Kidney (tissue), 22 donors: ENCODE measurements at regions of chr7 and their contacts with region 1.

Region 1: DNA sequence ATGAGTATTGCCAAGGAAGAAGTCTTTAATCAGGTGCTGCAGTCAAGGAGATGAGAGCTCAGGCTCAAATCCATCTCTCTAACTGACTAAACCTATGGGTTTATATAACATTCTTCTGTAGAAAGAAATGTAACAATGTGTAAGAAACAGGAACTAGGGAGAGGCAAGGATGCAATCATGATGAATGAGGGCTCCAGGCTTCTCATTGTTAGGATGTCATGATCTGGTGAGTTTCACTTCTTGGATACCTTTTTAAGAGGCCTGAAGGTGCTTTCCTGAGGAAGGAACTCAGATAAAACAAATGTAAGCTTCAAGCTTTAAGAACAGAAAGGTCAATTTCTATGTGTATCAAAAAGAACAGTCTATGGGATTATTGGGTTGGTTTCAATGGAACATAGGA is 30.8 kb upstream of the SCIN start:
- DNase-seq: no peak
- H3K4me3 ChIP-seq: no peak overlapping the region
- H3K27ac ChIP-seq: no peak overlapping the region
- H3K4me1 ChIP-seq: peaks cover 0 to 6% (median 0%) of the 10 kb centered on the region in 3 donors
- H3K27me3 ChIP-seq: no peaks in the 10 kb centered on the region
- CTCF ChIP-seq: no peak

Region 2: DNA sequence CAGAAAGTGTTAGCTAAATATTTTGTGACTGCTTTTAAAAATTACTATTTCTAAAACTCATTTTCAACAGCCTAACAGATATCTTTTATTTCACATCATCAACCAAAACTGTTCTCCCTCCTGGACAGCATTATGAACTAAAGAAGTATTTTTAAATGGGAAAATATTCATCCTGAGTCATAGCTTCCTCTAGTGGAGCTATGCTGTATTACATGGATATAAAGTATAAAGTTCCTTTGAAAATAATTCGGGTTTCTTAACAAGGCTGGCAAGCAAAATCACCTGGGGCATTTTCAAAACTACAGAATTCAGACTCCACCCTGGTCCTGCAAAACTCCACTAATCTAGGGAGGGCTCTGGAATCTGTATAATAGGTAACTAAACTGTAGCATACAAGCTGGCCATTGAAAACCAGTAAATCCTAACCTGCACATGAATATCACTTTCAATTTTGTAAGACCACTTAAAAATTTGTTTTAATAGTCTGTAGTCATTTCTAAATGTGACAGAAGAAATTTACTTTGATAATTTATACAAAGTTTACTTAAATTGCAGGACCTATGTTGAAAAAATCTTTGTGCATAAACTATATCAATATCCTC is 84.3 kb after region 1 on chr7:
- intact Hi-C with region 1: loop called (anchors 10 kb)
- DNase-seq: peak in 2 of 5 donors; percentile 49 to 61
- H3K4me3 ChIP-seq: no peak overlapping the region
- H3K27ac ChIP-seq: no peak overlapping the region
- H3K4me1 ChIP-seq: peaks cover 0 to 3% (median 0%) of the 10 kb centered on the region in 3 donors
- H3K27me3 ChIP-seq: no peaks in the 10 kb centered on the region
- CTCF ChIP-seq: peak; percentile 67

Region 3: GRCh38 chr7:12703881-12704280 is 164.2 kb after region 1 on chr7:
- intact Hi-C with region 1: no loop called
- DNase-seq: no peak
- H3K4me3 ChIP-seq: no peak overlapping the region
- H3K27ac ChIP-seq: no peak overlapping the region
- H3K4me1 ChIP-seq: no peaks in the 10 kb centered on the region
- H3K27me3 ChIP-seq: no peaks in the 10 kb centered on the region
- CTCF ChIP-seq: no peak